ENCODE measurements at regions of chr2 and their contacts with region 1.

Region 1: GRCh38 chr2:14673351-14673875 is 40.9 kb downstream of the LRATD1 start:
- DNase-seq: no peak
- CTCF ChIP-seq: no peak

Region 2: DNA sequence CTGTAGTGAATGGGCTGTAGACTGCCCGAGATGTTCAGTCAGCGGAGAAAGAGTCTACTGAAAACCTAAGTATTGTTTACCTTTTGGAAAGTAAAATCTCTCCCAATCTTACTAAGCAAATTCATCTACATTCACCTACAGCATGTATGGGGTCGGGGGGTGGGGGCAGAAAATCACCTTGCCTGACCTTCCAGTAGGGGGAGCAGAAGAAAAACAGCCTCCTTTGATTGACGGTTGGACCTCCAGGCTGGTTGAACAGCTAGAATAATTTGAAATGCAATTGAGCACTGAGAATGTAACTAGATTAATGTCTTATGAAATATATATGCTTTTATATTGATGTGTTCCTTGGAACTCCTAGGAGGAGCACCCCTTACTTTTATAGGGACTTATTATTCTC is 30.9 kb before region 1 on chr2:
- CTCF ChIA-PET with region 1: no interaction called
- POLR2A ChIA-PET with region 1: no interaction called
- DNase-seq: no peak
- CTCF ChIP-seq: no peak

Region 3: DNA sequence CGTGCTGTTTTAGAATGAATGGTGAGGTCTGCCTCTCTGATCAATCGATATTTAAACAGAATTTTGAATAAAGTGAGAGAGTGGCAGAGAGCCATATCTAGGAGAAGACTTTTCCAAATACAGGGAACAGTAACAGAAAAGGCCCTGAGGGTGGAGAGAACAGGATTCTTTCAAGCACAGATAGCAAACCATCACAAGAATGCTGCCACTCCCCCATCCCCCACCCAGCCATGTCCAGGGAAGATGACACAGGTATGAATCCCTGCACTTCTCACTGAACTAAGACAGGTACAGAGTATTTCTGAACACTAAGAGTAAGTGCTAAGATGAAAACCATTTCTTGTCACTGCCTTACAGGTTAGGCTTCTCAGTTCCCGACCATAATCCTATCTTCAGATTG is 17.3 kb before region 1 on chr2:
- CTCF ChIA-PET with region 1: no interaction called
- POLR2A ChIA-PET with region 1: no interaction called
- DNase-seq: no peak
- CTCF ChIP-seq: no peak

Region 4: GRCh38 chr2:14684516-14684915 is 11.1 kb after region 1 on chr2:
- CTCF ChIA-PET with region 1: interaction called, 31 read pairs
- POLR2A ChIA-PET with region 1: no interaction called
- DNase-seq: no peak
- CTCF ChIP-seq: no peak

Region 5: GRCh38 chr2:15242936-15243461 is 569.6 kb after region 1 on chr2:
- CTCF ChIA-PET with region 1: no interaction called
- POLR2A ChIA-PET with region 1: no interaction called
- DNase-seq: no peak
- CTCF ChIP-seq: no peak